ENCODE measurements at regions of chr17 and their contacts with region 1.

Region 1: GRCh38 chr17:48457080-48457836 is 27.2 kb upstream of the SKAP1 start:
- DNase-seq: peak; percentile 83
- H3K4me3 Mint-ChIP-seq: peak overlapping the region; percentile 66
- H3K27ac Mint-ChIP-seq: no peak overlapping the region
- H3K4me1 Mint-ChIP-seq: peaks cover 47% of the 10 kb centered on the region
- H3K27me3 Mint-ChIP-seq: no peaks in the 10 kb centered on the region

Region 2: GRCh38 chr17:48254896-48255295 is 202.4 kb before region 1 on chr17:
- CTCF ChIA-PET with region 1: no interaction called
- intact Hi-C with region 1: no loop called
- DNase-seq: no peak
- H3K4me3 Mint-ChIP-seq: no peak overlapping the region
- H3K27ac Mint-ChIP-seq: no peak overlapping the region
- H3K4me1 Mint-ChIP-seq: peaks cover 2% of the 10 kb centered on the region
- H3K27me3 Mint-ChIP-seq: no peaks in the 10 kb centered on the region

Region 3: GRCh38 chr17:48335858-48336500 is 121.3 kb before region 1 on chr17:
- CTCF ChIA-PET with region 1: interaction called, 9 read pairs
- intact Hi-C with region 1: loop called (anchors 1 kb)
- DNase-seq: no peak
- H3K4me3 Mint-ChIP-seq: no peak overlapping the region
- H3K27ac Mint-ChIP-seq: no peak overlapping the region
- H3K4me1 Mint-ChIP-seq: peaks cover 6% of the 10 kb centered on the region
- H3K27me3 Mint-ChIP-seq: no peaks in the 10 kb centered on the region

Region 4: GRCh38 chr17:48441231-48441711 is 16.0 kb before region 1 on chr17:
- CTCF ChIA-PET with region 1: interaction called, 96 read pairs
- intact Hi-C with region 1: loop called (anchors 1 kb)
- DNase-seq: peak; percentile 60
- H3K4me3 Mint-ChIP-seq: peak overlapping the region; percentile 17
- H3K27ac Mint-ChIP-seq: peak overlapping the region; percentile 92
- H3K4me1 Mint-ChIP-seq: peaks cover 93% of the 10 kb centered on the region
- H3K27me3 Mint-ChIP-seq: no peaks in the 10 kb centered on the region